Heart right ventricle (tissue), 16 donors: ENCODE measurements at regions of chr9 and their contacts with region 1.

Region 1: GRCh38 chr9:105712773-105713172 is 18.4 kb downstream of the TMEM38B start:
- DNase-seq: no peak
- ATAC-seq: peak in 6 of 8 donors; percentile 15 to 65 (median 31)
- H3K4me3 ChIP-seq: no peak overlapping the region
- H3K27ac ChIP-seq: peak overlapping the region in 3 of 10 donors; percentile 1 to 60 (median 51)
- H3K4me1 ChIP-seq: peaks cover 0 to 31% (median 0%) of the 10 kb centered on the region in 9 donors
- H3K27me3 ChIP-seq: no peaks in the 10 kb centered on the region
- CTCF ChIP-seq: no peak

Region 2: GRCh38 chr9:105608721-105609598 is 103.8 kb before region 1 on chr9:
- intact Hi-C with region 1: loop called in 3 of 10 experiments (anchors 5 to 10 kb)
- DNase-seq: peak in 1 of 2 donors; percentile 6
- ATAC-seq: no peak
- H3K4me3 ChIP-seq: no peak overlapping the region
- H3K27ac ChIP-seq: no peak overlapping the region
- H3K4me1 ChIP-seq: no peaks in the 10 kb centered on the region
- H3K27me3 ChIP-seq: no peaks in the 10 kb centered on the region
- CTCF ChIP-seq: peak in 8 of 9 donors; percentile 31 to 71 (median 61)

Region 3: DNA sequence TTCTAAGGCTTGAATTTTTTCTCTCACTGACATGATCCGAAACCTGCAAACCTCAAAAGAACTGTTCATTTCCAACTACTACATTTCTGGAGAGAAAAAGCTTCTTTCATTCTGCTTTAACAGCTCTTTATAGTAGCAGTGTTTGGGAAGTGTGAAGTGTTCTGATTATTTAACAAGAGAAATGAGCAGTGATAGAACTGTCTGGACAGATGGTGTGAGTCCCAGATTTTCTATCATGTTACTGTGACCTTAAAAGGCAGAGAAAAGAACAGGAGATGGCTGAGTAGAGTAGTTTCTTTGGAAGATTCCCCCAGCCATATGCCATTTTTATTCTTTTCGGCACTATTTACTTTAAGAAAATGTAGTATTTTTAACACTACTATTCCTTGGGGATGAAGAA is 91.8 kb before region 1 on chr9:
- intact Hi-C with region 1: loop called in 1 of 10 experiments (anchors 5 kb)
- DNase-seq: no peak
- ATAC-seq: no peak
- H3K4me3 ChIP-seq: no peak overlapping the region
- H3K27ac ChIP-seq: no peak overlapping the region
- H3K4me1 ChIP-seq: no peaks in the 10 kb centered on the region
- H3K27me3 ChIP-seq: no peaks in the 10 kb centered on the region
- CTCF ChIP-seq: no peak

Region 4: DNA sequence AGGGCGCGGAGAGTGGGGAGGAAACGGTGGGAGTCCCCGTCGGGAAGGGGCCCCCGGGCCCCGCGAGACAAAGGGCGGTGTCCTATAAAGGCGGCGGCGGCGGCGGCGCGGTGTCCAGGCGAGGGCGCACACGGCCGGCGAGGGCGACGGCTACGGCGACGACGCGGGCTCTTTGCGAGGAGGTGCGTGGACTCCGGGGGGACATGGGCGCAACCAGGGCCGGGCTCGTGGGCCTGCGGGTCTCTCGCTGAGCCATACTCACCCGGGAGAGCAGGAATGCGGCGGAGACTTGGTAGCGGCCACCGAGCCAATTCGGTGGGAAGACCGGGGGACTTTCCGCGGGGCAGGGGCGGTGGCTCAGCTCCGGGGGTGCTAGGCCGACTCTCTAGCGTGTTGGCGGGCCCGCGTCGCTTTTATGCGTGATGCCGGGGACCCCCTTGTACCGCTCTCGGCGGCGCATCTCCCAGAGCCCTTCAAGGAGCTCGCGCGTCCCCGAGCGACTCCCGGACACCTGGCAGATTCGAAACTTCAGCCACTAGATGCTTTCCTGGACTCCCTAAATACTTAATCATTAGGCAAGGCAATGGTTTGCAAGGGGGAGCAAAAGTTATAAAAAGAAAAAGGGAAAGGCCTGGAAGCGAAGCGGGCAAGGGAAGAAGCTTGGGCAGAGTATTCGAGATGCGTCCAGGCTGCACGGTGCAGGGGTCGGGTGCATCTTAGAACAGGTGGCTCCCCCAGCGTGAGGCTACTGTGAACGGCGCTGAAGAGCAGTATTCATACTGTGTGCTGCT is 56.4 kb before region 1 on chr9:
- intact Hi-C with region 1: loop called in 6 of 10 experiments (anchors 5 to 10 kb)
- DNase-seq: peak; percentile 5 to 48
- ATAC-seq: peak; percentile 79 to 94 (median 91)
- H3K4me3 ChIP-seq: peak overlapping the region; percentile 16 to 75 (median 57)
- H3K27ac ChIP-seq: peak overlapping the region in 1 of 10 donors; percentile 20
- H3K4me1 ChIP-seq: peaks cover 0 to 16% (median 13%) of the 10 kb centered on the region in 9 donors
- H3K27me3 ChIP-seq: peaks cover 0 to 36% (median 27%) of the 10 kb centered on the region in 7 donors
- CTCF ChIP-seq: peak; percentile 20 to 66 (median 43)

Region 5: GRCh38 chr9:105694190-105694847 is 18.5 kb before region 1 on chr9 and contains the start of gene TMEM38B:
- intact Hi-C with region 1: no loop called
- DNase-seq: peak; percentile 75 to 84
- ATAC-seq: peak; percentile 95 to 99 (median 98)
- H3K4me3 ChIP-seq: peak within 1 kb of the TSS; percentile 66 to 97 (median 82)
- H3K27ac ChIP-seq: peak within 1 kb of the TSS; percentile 37 to 88 (median 80)
- H3K4me1 ChIP-seq: peaks cover 0 to 46% (median 23%) of the 10 kb centered on the region in 9 donors
- H3K27me3 ChIP-seq: peaks cover 0 to 37% (median 25%) of the 10 kb centered on the region in 7 donors
- CTCF ChIP-seq: no peak
- total RNA-seq, gene TMEM38B: 49.1 to 68.4 (median 55.2) TPM